ENCODE measurements at regions of chr20 and their contacts with region 1.

Region 1: DNA sequence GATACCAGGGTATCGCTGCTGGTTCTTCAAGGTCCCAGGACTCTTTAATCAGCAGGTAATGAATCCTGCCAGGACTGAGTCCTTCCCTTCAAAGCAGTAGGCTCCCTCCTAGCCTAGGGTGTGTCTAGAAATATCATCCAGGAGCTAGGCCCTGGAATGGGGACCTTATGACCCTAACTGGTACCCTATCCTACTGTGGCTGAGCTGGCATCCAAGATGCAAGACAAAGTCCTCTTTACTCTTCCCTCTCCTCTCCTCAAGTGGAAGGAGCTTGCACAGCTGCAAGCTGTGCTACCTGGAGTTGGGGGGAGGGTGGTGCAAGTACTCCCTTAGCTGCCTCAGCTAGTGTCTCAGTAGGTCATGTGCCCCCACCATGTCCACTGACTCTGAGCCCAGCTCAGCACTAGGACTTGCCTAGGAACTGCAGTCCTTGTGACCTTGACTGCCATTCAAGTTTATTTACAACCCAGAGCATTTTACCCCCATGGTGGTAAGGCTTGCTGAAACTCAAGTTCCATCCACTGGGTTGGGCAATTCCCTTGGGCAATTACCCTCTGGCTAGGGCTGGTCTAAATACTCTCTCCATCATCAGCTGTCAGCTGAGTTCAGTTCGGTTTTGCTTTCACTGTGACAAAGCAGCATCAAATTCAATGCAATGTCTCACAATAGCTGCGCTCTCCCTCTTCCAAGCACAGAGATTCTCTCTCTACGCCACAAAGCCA is 48.4 kb upstream of the TOP1 start:
- DNase-seq: no peak
- H3K4me3 ChIP-seq: no peak overlapping the region
- H3K27ac ChIP-seq: no peak overlapping the region
- H3K4me1 ChIP-seq: no peaks in the 10 kb centered on the region
- H3K27me3 ChIP-seq: no peaks in the 10 kb centered on the region
- CTCF ChIP-seq: no peak

Region 2: GRCh38 chr20:41081276-41081814 is 101.1 kb after region 1 on chr20:
- intact Hi-C with region 1: no loop called
- DNase-seq: no peak
- H3K4me3 ChIP-seq: no peak overlapping the region
- H3K27ac ChIP-seq: no peak overlapping the region
- H3K4me1 ChIP-seq: peaks cover 0 to 3% (median 0%) of the 10 kb centered on the region in 3 donors
- H3K27me3 ChIP-seq: no peaks in the 10 kb centered on the region
- CTCF ChIP-seq: no peak

Region 3: DNA sequence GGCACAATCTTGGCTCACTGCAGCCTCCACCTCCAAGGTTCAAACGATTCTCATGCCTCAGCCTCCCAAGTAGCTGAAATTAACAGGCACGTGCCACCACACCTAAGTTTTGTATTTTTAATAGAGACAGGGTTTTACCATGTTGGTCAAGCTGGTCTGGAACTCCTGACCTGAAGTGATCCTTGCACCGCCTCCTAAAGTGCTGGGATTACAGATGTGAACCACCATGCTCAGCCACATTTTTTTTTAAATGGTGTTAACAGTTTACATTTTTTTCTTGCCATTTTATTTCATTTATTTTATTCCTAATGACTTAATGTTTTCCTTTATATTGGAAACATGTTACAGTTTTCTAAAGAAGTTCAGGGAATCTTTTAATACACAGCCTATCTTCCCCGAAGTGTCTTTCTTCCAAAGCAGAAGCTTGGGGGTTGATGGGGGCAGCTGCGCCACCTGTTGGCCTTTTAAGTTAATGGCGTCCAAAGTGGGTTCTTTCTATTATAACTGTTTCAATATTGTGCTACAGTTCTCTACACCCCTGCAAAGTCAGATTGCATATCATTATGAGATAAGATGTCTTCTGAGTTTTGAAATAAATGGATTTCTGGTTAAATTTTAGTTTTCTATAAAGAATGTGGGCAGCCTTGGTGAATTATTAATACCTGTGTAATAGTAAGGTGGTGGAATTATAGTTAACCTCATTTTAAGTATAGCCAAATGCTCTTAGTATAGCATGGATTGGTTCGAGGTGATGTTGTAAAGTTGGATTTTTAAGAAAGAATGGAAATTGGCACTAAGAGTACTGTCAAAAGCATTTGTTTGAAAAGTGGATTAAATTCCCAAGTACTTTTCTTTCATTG is 115.1 kb after region 1 on chr20:
- intact Hi-C with region 1: loop called (anchors 10 kb)
- DNase-seq: peak; percentile 52 to 81 (median 56)
- H3K4me3 ChIP-seq: no peak overlapping the region
- H3K27ac ChIP-seq: no peak overlapping the region
- H3K4me1 ChIP-seq: no peaks in the 10 kb centered on the region
- H3K27me3 ChIP-seq: no peaks in the 10 kb centered on the region
- CTCF ChIP-seq: peak; percentile 73

Region 4: GRCh38 chr20:41509316-41510200 is 529.3 kb after region 1 on chr20:
- intact Hi-C with region 1: no loop called
- DNase-seq: peak in 1 of 5 donors; percentile 45
- H3K4me3 ChIP-seq: no peak overlapping the region
- H3K27ac ChIP-seq: no peak overlapping the region
- H3K4me1 ChIP-seq: peaks cover 8 to 16% (median 13%) of the 10 kb centered on the region in 3 donors
- H3K27me3 ChIP-seq: no peaks in the 10 kb centered on the region
- CTCF ChIP-seq: no peak

Measured in kidney (tissue), 22 donors.